ENCODE measurements at regions of chr17 and their contacts with region 1.

Region 1: DNA sequence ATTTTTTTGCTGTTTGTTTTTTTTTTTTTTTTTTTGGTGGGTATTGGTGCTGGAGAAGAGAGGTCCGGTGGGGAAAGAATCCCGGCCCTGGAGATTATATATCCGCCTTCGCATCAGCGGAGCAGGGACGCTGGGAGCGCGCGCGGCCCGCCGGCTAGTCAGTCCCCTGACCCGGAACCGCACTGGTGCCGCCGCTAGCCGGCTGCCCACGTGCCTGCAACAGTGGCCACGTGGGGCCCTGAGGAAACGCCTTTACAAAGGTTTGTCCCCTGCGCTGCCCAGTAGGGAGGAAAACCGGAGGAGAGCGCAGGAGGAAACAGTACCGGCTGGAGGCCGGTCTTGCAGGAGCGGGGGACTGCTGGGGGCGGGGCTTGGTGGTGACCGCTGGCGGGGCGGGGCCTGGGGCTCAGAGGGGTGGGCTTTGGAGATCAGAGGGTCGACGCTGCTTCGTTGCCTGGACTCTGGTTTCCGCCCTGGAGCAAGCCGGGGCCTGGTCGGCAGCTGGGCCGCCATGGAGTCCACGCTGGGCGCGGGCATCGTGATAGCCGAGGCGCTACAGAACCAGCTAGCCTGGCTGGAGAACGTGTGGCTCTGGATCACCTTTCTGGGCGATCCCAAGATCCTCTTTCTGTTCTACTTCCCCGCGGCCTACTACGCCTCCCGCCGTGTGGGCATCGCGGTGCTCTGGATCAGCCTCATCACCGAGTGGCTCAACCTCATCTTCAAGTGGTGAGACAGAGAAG is at the start of gene G6PC3:
- DNase-seq: peak; percentile 30 to 88 (median 75)
- ATAC-seq: peak; percentile 55
- H3K4me3 ChIP-seq: peak within 1 kb of the TSS; percentile 70 to 84
- H3K4me3 Mint-ChIP-seq: peak within 1 kb of the TSS; percentile 96
- H3K27ac ChIP-seq: peak within 1 kb of the TSS; percentile 62 to 80
- H3K27ac Mint-ChIP-seq: peak within 1 kb of the TSS; percentile 94
- H3K4me1 ChIP-seq: peaks cover 23% of the 10 kb centered on the region
- H3K4me1 Mint-ChIP-seq: peaks cover 34% of the 10 kb centered on the region
- H3K27me3 ChIP-seq: no peaks in the 10 kb centered on the region
- H3K27me3 Mint-ChIP-seq: no peaks in the 10 kb centered on the region
- CTCF ChIP-seq: no peak
- total RNA-seq, gene G6PC3: 4.8 to 5.9 TPM

Region 2: DNA sequence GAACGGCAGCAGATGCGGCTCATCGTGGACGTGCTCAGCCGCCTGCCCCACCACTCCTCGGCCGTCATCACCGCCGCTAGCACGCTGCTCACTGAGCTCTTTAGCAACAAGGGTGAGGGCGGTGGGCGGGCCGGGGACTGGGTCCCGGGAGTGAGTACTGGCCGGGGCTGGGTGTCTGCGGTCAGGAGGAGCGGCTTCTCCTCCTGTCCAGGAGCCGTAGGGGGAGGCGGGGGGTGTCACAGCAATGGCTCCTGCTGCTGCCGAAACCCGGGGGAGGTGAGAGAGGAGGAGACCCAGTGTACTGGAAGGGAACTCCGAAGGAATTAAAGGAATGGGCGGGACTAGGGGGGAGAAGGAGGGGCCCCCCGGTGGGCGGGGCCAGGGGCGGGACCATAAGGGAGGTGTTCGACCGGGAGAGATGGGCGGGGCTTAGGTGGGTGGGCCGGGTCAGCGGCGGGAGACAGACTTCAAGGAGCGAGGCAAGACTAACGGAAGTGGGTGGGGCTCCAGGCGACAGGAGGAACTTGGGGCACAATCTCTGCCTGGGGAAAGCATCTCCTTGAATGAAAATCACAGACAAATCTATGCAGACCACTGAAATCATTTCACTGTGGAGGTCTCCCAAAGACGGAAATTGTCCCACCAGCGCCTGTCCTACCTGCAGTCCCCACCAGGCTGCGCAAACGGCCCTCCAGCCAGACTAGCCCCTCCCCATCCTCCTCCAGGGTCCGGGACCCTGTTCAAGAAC is 63.9 kb before region 1 on chr17:
- CTCF ChIA-PET with region 1: no interaction called
- POLR2A ChIA-PET with region 1: no interaction called
- intact Hi-C with region 1: loop called in 1 of 2 experiments (anchors 2 kb)
- DNase-seq: peak; percentile 91 to 99 (median 97)
- ATAC-seq: peak; percentile 88
- H3K4me3 ChIP-seq: peak overlapping the region; percentile 50 to 60
- H3K4me3 Mint-ChIP-seq: peak overlapping the region; percentile 88
- H3K27ac ChIP-seq: peak overlapping the region in 1 of 2 experiments; percentile 22
- H3K27ac Mint-ChIP-seq: no peak overlapping the region
- H3K4me1 ChIP-seq: peaks cover 30% of the 10 kb centered on the region
- H3K4me1 Mint-ChIP-seq: peaks cover 21% of the 10 kb centered on the region
- H3K27me3 ChIP-seq: peaks cover 0 to 17% of the 10 kb centered on the region in 2 experiments
- H3K27me3 Mint-ChIP-seq: peaks cover 5% of the 10 kb centered on the region
- CTCF ChIP-seq: no peak

Region 3: DNA sequence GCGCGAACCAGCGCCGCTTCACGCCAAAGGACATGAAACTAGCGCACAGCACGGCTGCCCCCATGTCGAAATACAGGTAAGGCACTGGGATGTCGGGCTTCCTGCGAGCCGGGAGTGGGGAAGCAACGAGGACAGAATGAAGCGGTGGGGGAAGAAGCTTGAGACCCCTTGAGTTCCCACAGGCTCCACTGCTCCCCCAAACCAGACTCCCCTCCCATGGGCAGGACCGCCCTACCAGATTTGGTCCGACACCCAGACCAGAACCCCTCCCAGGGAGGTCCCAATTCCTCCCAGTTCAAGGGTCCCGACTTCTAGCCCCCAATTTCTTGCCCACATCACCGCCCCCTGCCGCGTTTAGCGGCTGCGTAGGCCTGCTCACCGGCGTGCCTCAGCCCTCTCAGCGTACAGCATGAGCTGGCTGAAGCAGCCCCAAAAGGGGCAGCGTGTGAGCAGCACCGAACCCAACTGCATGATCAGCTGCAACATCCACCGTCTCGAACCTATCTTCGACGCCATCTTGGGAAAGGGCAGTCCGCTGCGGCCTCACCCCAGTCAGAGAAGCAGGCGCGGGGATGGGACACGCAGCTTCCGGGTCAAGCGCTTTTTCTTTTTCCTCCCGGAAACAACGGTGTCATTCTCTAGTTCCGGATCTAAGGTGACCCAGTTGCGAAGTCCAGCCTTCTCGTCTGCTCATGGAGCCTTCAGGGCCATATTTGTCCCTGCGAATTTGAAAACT is 56.0 kb before region 1 on chr17 and contains the start of gene TMEM101:
- CTCF ChIA-PET with region 1: no interaction called
- POLR2A ChIA-PET with region 1: interaction called, 5 read pairs
- intact Hi-C with region 1: loop called (anchors 1 kb)
- DNase-seq: peak; percentile 79 to 95 (median 90)
- ATAC-seq: peak; percentile 99
- H3K4me3 ChIP-seq: peak within 1 kb of the TSS; percentile 81 to 91
- H3K4me3 Mint-ChIP-seq: peak within 1 kb of the TSS; percentile 100
- H3K27ac ChIP-seq: peak within 1 kb of the TSS; percentile 51 to 55
- H3K27ac Mint-ChIP-seq: peak within 1 kb of the TSS; percentile 95
- H3K4me1 ChIP-seq: peaks cover 11% of the 10 kb centered on the region
- H3K4me1 Mint-ChIP-seq: peaks cover 10% of the 10 kb centered on the region
- H3K27me3 ChIP-seq: no peaks in the 10 kb centered on the region
- H3K27me3 Mint-ChIP-seq: no peaks in the 10 kb centered on the region
- CTCF ChIP-seq: no peak
- total RNA-seq, gene TMEM101: 8.1 to 8.7 TPM

Region 4: GRCh38 chr17:44086364-44087311 is 16.0 kb after region 1 on chr17:
- CTCF ChIA-PET with region 1: interaction called, 5 read pairs
- POLR2A ChIA-PET with region 1: no interaction called
- intact Hi-C with region 1: loop called in 1 of 2 experiments (anchors 2 kb)
- DNase-seq: peak in 7 of 9 experiments; percentile 14 to 61 (median 33)
- ATAC-seq: peak; percentile 71
- H3K4me3 ChIP-seq: no peak overlapping the region
- H3K4me3 Mint-ChIP-seq: no peak overlapping the region
- H3K27ac ChIP-seq: no peak overlapping the region
- H3K27ac Mint-ChIP-seq: peak overlapping the region; percentile 72
- H3K4me1 ChIP-seq: no peaks in the 10 kb centered on the region
- H3K4me1 Mint-ChIP-seq: peaks cover 2% of the 10 kb centered on the region
- H3K27me3 ChIP-seq: no peaks in the 10 kb centered on the region
- H3K27me3 Mint-ChIP-seq: no peaks in the 10 kb centered on the region
- CTCF ChIP-seq: no peak

Region 5: DNA sequence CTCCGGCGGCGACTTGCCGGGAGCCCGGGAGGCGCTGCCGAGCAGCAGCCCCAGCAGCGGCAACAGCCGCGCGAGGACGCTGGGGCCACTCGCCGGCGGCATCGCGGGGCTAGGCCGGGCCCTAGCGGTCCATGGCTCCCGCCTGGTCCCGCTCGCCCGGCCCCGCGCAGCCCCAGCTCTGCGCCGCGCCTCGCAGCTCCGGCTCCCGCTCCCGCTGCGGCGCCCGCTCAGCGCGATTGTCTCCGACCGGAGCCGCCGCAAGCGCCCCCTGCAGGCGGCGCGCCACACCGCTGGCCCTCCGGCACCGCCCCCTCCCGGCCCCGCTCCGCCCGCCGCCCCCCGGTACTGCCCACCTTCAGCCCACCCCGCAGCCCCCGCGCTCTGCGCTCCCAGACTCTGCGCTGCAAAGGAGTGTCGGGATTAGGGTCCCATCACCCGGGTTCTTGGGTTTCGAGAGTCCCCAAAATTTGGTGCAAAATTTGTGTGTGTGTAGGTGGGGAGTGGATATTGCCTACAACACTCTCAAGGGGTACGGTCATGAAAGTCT is 293.1 kb after region 1 on chr17 and contains the start of gene FAM171A2:
- CTCF ChIA-PET with region 1: no interaction called
- POLR2A ChIA-PET with region 1: no interaction called
- intact Hi-C with region 1: no loop called
- DNase-seq: peak; percentile 44 to 86 (median 61)
- ATAC-seq: peak; percentile 92
- H3K4me3 ChIP-seq: peak within 1 kb of the TSS; percentile 51 to 59
- H3K4me3 Mint-ChIP-seq: peak within 1 kb of the TSS; percentile 80
- H3K27ac ChIP-seq: no peak within 1 kb of the TSS
- H3K27ac Mint-ChIP-seq: no peak within 1 kb of the TSS
- H3K4me1 ChIP-seq: peaks cover 3% of the 10 kb centered on the region
- H3K4me1 Mint-ChIP-seq: peaks cover 8% of the 10 kb centered on the region
- H3K27me3 ChIP-seq: peaks cover 0 to 12% of the 10 kb centered on the region in 2 experiments
- H3K27me3 Mint-ChIP-seq: peaks cover 19% of the 10 kb centered on the region
- CTCF ChIP-seq: peak; percentile 89
- total RNA-seq, gene FAM171A2: 0.24 to 0.44 TPM

Region 6: GRCh38 chr17:45051060-45051719 is 980.6 kb after region 1 on chr17 and contains the start of gene DCAKD:
- CTCF ChIA-PET with region 1: no interaction called
- POLR2A ChIA-PET with region 1: no interaction called
- intact Hi-C with region 1: loop called in 1 of 2 experiments (anchors 5 kb)
- DNase-seq: peak; percentile 76 to 97 (median 85)
- ATAC-seq: peak; percentile 90
- H3K4me3 ChIP-seq: peak within 1 kb of the TSS; percentile 61 to 82
- H3K4me3 Mint-ChIP-seq: peak within 1 kb of the TSS; percentile 86
- H3K27ac ChIP-seq: peak within 1 kb of the TSS; percentile 78 to 95
- H3K27ac Mint-ChIP-seq: peak within 1 kb of the TSS; percentile 94
- H3K4me1 ChIP-seq: peaks cover 29% of the 10 kb centered on the region
- H3K4me1 Mint-ChIP-seq: peaks cover 36% of the 10 kb centered on the region
- H3K27me3 ChIP-seq: no peaks in the 10 kb centered on the region
- H3K27me3 Mint-ChIP-seq: no peaks in the 10 kb centered on the region
- CTCF ChIP-seq: no peak
- total RNA-seq, gene DCAKD: 8.3 to 8.4 TPM

Region 7: GRCh38 chr17:45123930-45124796 is 1053.5 kb after region 1 on chr17:
- CTCF ChIA-PET with region 1: no interaction called
- POLR2A ChIA-PET with region 1: no interaction called
- intact Hi-C with region 1: no loop called
- DNase-seq: peak in 4 of 9 experiments; percentile 25 to 40 (median 38)
- ATAC-seq: peak; percentile 61
- H3K4me3 ChIP-seq: no peak overlapping the region
- H3K4me3 Mint-ChIP-seq: no peak overlapping the region
- H3K27ac ChIP-seq: no peak overlapping the region
- H3K27ac Mint-ChIP-seq: no peak overlapping the region
- H3K4me1 ChIP-seq: no peaks in the 10 kb centered on the region
- H3K4me1 Mint-ChIP-seq: no peaks in the 10 kb centered on the region
- H3K27me3 ChIP-seq: no peaks in the 10 kb centered on the region
- H3K27me3 Mint-ChIP-seq: no peaks in the 10 kb centered on the region
- CTCF ChIP-seq: no peak